ENCODE measurements at regions of chr3 and their contacts with region 1.

Region 1: DNA sequence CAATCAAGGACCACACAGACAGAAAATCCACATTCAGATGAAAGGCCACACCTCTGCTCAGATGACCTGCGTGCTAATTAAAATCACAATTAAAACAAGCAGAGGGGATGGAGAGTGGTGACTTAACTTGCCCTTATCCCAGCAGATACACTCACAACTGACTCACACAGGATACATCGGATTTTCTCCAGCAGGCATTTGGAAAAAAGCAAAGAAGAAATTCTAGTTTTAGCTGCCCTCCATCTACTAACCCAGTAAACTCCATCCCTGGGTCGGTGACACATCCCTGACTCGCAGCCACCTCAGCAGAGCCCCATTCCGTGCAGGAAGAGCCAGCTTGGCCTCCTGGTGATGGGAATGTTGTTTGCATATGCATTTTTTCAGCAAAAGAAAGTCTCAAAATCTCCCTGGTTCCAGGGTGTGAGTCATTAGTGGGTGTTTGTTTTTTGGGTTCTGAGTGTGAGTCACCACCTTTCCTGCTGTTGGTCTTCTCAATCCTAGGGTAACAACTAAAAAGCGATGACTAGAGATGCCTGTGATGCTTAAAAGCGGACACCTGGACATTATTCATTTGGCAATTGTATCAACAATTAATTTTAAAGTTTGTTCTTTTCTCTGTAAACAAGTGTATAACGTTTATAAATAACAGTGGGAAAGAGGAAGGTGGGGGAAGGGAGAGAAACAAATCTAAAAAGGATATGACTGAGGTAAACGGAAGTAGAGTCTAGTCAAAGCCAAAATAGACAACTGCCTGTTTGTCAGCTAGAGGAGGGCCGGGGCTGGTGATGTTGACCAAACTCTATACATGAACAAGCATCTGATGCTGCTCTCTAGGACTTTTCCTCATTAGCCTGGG is 49.8 kb upstream of the SLC4A7 start:
- DNase-seq: peak; percentile 100
- H3K4me3 ChIP-seq: peak overlapping the region in 1 of 3 experiments; percentile 37
- H3K27ac ChIP-seq: peak overlapping the region; percentile 96
- H3K4me1 ChIP-seq: peaks cover 44% of the 10 kb centered on the region
- H3K27me3 ChIP-seq: no peaks in the 10 kb centered on the region
- CTCF ChIP-seq: peak; percentile 68 to 75

Region 2: DNA sequence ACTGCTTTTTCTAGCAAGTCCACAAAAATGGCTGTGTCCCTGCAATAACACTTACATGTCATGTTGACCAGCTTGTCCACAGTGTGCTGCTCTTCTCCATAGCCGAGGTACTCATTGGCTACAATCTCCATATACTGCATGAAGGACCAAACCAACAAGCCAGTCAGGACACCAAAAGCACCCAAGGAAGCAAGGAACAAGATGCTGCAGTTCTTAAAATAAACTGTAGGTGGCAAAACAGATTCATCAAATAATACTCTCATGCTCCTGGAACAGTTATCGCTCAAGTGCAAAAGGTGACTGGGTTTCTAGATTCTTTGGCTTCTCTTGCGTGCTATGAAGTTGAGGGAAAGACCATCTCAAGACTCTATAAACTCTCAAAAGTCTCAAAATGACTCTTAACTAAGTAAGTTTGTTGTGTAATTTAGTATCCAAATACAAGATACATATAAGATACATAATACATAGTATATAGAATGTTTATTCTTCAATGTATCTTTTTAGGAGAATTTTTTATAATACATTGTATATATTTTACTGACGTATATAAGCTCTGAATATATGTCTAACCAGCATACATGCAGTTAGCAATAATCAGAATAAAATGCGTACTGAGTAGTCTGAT is 221.8 kb before region 1 on chr3:
- CTCF ChIA-PET with region 1: no interaction called
- dilution Hi-C with region 1: no loop called
- in situ Hi-C with region 1: no loop called
- intact Hi-C with region 1: loop called (anchors 1 kb)
- DNase-seq: peak; percentile 65
- H3K4me3 ChIP-seq: no peak overlapping the region
- H3K27ac ChIP-seq: no peak overlapping the region
- H3K4me1 ChIP-seq: peaks cover 16% of the 10 kb centered on the region
- H3K27me3 ChIP-seq: no peaks in the 10 kb centered on the region
- CTCF ChIP-seq: peak; percentile 68 to 72

Region 3: GRCh38 chr3:27415202-27415601 is 118.7 kb before region 1 on chr3:
- CTCF ChIA-PET with region 1: no interaction called
- dilution Hi-C with region 1: no loop called
- in situ Hi-C with region 1: no loop called
- intact Hi-C with region 1: no loop called
- DNase-seq: no peak
- H3K4me3 ChIP-seq: no peak overlapping the region
- H3K27ac ChIP-seq: no peak overlapping the region
- H3K4me1 ChIP-seq: no peaks in the 10 kb centered on the region
- H3K27me3 ChIP-seq: no peaks in the 10 kb centered on the region
- CTCF ChIP-seq: no peak

Region 4: GRCh38 chr3:27484015-27484844 is 49.7 kb before region 1 on chr3 and contains the start of gene SLC4A7:
- CTCF ChIA-PET with region 1: no interaction called
- dilution Hi-C with region 1: loop called (anchors 5 kb)
- in situ Hi-C with region 1: no loop called
- intact Hi-C with region 1: loop called (anchors 1 kb)
- DNase-seq: peak; percentile 96
- H3K4me3 ChIP-seq: peak within 1 kb of the TSS; percentile 71 to 93 (median 92)
- H3K27ac ChIP-seq: peak within 1 kb of the TSS; percentile 67
- H3K4me1 ChIP-seq: peaks cover 13% of the 10 kb centered on the region
- H3K27me3 ChIP-seq: no peaks in the 10 kb centered on the region
- CTCF ChIP-seq: no peak
- total RNA-seq, gene SLC4A7: 95.4 to 123 TPM

Region 5: GRCh38 chr3:27596334-27596841 is 62.4 kb after region 1 on chr3:
- CTCF ChIA-PET with region 1: no interaction called
- dilution Hi-C with region 1: loop called (anchors 10 kb)
- in situ Hi-C with region 1: no loop called
- intact Hi-C with region 1: no loop called
- DNase-seq: no peak
- H3K4me3 ChIP-seq: no peak overlapping the region
- H3K27ac ChIP-seq: no peak overlapping the region
- H3K4me1 ChIP-seq: peaks cover under 1% of the 10 kb centered on the region
- H3K27me3 ChIP-seq: no peaks in the 10 kb centered on the region
- CTCF ChIP-seq: no peak

Region 6: GRCh38 chr3:27632431-27633223 is 98.7 kb after region 1 on chr3:
- CTCF ChIA-PET with region 1: no interaction called
- dilution Hi-C with region 1: no loop called
- in situ Hi-C with region 1: no loop called
- intact Hi-C with region 1: loop called (anchors 1 kb)
- DNase-seq: peak; percentile 60
- H3K4me3 ChIP-seq: peak overlapping the region in 2 of 3 experiments; percentile 38 to 46
- H3K27ac ChIP-seq: no peak overlapping the region
- H3K4me1 ChIP-seq: no peaks in the 10 kb centered on the region
- H3K27me3 ChIP-seq: no peaks in the 10 kb centered on the region
- CTCF ChIP-seq: no peak

Region 7: GRCh38 chr3:27681245-27681748 is 147.4 kb after region 1 on chr3:
- CTCF ChIA-PET with region 1: interaction called, 4 read pairs
- dilution Hi-C with region 1: no loop called
- in situ Hi-C with region 1: no loop called
- intact Hi-C with region 1: loop called (anchors 1 kb)
- DNase-seq: peak; percentile 72
- H3K4me3 ChIP-seq: peak overlapping the region in 2 of 3 experiments; percentile 15 to 24
- H3K27ac ChIP-seq: peak overlapping the region; percentile 27
- H3K4me1 ChIP-seq: peaks cover 21% of the 10 kb centered on the region
- H3K27me3 ChIP-seq: no peaks in the 10 kb centered on the region
- CTCF ChIP-seq: peak; percentile 64 to 67